Activated T-helper 1 cell treated with anti-CD3 and anti-CD28 coated beads, Interleukin-12 subunit alpha, Interleukin-12 subunit beta, Interleukin-2, Interleukin-4 antibody, amounts not matched to agents 30 ng/mL and 10 ng/mL and 1 ng/mL, durations not matched to agents 14 hours and 24 hours and 36 hours (primary cell): ENCODE measurements at regions of chr10 and their contacts with region 1.

Region 1: GRCh38 chr10:72567884-72568640 is 57.8 kb downstream of the MICU1 start:
- DNase-seq: no peak
- H3K4me3 Mint-ChIP-seq: no peak overlapping the region
- H3K27ac Mint-ChIP-seq: no peak overlapping the region
- H3K4me1 Mint-ChIP-seq: peaks cover 28% of the 10 kb centered on the region
- H3K27me3 Mint-ChIP-seq: no peaks in the 10 kb centered on the region

Region 2: GRCh38 chr10:72625608-72626443 is 57.8 kb after region 1 on chr10 and contains the start of gene MICU1:
- intact Hi-C with region 1: loop called (anchors 1 kb)
- DNase-seq: peak; percentile 93
- H3K4me3 Mint-ChIP-seq: peak within 1 kb of the TSS; percentile 96
- H3K27ac Mint-ChIP-seq: peak within 1 kb of the TSS; percentile 94
- H3K4me1 Mint-ChIP-seq: peaks cover 13% of the 10 kb centered on the region
- H3K27me3 Mint-ChIP-seq: peaks cover 6% of the 10 kb centered on the region
- total RNA-seq, gene MICU1: 28.4 and 29.5 TPM in 2 replicates

Region 3: GRCh38 chr10:72637398-72637857 is 69.4 kb after region 1 on chr10:
- intact Hi-C with region 1: loop called (anchors 1 kb)
- DNase-seq: peak; percentile 42
- H3K4me3 Mint-ChIP-seq: no peak overlapping the region
- H3K27ac Mint-ChIP-seq: peak overlapping the region; percentile 74
- H3K4me1 Mint-ChIP-seq: peaks cover 12% of the 10 kb centered on the region
- H3K27me3 Mint-ChIP-seq: peaks cover 10% of the 10 kb centered on the region

Region 4: GRCh38 chr10:72834183-72834825 is 266.2 kb after region 1 on chr10:
- intact Hi-C with region 1: loop called (anchors 5 kb)
- DNase-seq: peak; percentile 14
- H3K4me3 Mint-ChIP-seq: no peak overlapping the region
- H3K27ac Mint-ChIP-seq: no peak overlapping the region
- H3K4me1 Mint-ChIP-seq: no peaks in the 10 kb centered on the region
- H3K27me3 Mint-ChIP-seq: no peaks in the 10 kb centered on the region

Region 5: DNA sequence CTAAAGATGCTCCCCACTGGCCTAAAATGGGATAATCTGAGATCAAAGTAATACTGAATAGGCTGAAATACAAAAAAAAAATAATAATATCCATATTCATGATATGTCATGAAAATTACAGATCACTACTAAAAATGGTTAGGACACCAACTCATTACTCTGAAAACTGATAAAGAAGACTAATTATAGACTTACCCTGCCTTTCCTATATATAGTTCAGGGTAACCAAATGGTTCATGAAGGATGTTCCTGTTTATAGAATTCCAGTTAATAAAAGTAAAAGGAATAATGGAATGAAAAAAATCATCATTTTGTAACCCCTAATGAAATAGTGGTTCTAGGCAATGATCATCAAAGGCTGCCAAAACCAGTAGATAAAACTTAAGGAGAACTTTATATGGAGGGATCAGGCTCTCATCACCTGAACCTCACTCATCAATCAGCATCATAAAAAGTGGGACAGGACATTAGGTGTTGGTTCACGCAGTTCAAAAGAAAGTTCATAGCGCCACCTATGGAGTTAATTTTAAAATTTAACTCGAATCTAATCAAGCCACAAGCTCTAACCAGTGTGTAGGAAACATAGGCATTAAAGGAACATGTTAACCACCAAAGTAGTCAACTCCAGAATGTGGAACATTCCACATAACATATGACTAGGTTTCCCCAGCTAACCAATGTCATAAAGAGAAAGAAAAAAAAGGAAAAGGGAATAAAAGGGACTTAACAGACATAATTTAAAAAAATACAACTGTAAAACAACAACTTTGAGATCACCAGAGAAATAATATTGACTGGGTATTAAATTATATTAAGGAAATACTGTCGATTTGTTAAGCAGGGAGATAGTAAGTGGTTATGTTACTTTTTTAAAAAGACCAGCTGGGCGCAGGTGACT is 492.9 kb after region 1 on chr10:
- intact Hi-C with region 1: loop called (anchors 2 kb)
- DNase-seq: no peak
- H3K4me3 Mint-ChIP-seq: no peak overlapping the region
- H3K27ac Mint-ChIP-seq: peak overlapping the region; percentile 18
- H3K4me1 Mint-ChIP-seq: peaks cover 19% of the 10 kb centered on the region
- H3K27me3 Mint-ChIP-seq: no peaks in the 10 kb centered on the region